Mammary epithelial cell (primary cell): ENCODE measurements at regions of chr10 and their contacts with region 1.

Region 1: GRCh38 chr10:132446661-132447194 is 49.7 kb downstream of the PWWP2B start:
- DNase-seq: peak; percentile 64
- H3K4me3 ChIP-seq: no peak overlapping the region
- H3K27ac ChIP-seq: peak overlapping the region; percentile 98
- H3K4me1 ChIP-seq: peaks cover 19% of the 10 kb centered on the region
- H3K27me3 ChIP-seq: no peaks in the 10 kb centered on the region
- CTCF ChIP-seq: peak; percentile 18 to 52

Region 2: GRCh38 chr10:131002031-131002861 is 1444.5 kb before region 1 on chr10:
- CTCF ChIA-PET with region 1: no interaction called
- dilution Hi-C with region 1: no loop called
- in situ Hi-C with region 1: no loop called
- intact Hi-C with region 1: no loop called
- DNase-seq: no peak
- H3K4me3 ChIP-seq: no peak overlapping the region
- H3K27ac ChIP-seq: no peak overlapping the region
- H3K4me1 ChIP-seq: no peaks in the 10 kb centered on the region
- H3K27me3 ChIP-seq: no peaks in the 10 kb centered on the region
- CTCF ChIP-seq: no peak

Region 3: GRCh38 chr10:132223156-132223590 is 223.6 kb before region 1 on chr10:
- CTCF ChIA-PET with region 1: no interaction called
- dilution Hi-C with region 1: no loop called
- in situ Hi-C with region 1: loop called (anchors 5 to 10 kb)
- intact Hi-C with region 1: no loop called
- DNase-seq: peak; percentile 55
- H3K4me3 ChIP-seq: no peak overlapping the region
- H3K27ac ChIP-seq: no peak overlapping the region
- H3K4me1 ChIP-seq: no peaks in the 10 kb centered on the region
- H3K27me3 ChIP-seq: no peaks in the 10 kb centered on the region
- CTCF ChIP-seq: peak; percentile 97 to 99

Region 4: GRCh38 chr10:132331526-132332432 is 114.9 kb before region 1 on chr10 and contains the start of gene LRRC27:
- CTCF ChIA-PET with region 1: no interaction called
- dilution Hi-C with region 1: no loop called
- in situ Hi-C with region 1: no loop called
- intact Hi-C with region 1: loop called (anchors 2 kb)
- DNase-seq: peak; percentile 96
- H3K4me3 ChIP-seq: peak within 1 kb of the TSS; percentile 90 to 99 (median 94)
- H3K27ac ChIP-seq: peak within 1 kb of the TSS; percentile 40
- H3K4me1 ChIP-seq: peaks cover 15% of the 10 kb centered on the region
- H3K27me3 ChIP-seq: no peaks in the 10 kb centered on the region
- CTCF ChIP-seq: no peak
- total RNA-seq, gene LRRC27: 6.1 to 6.8 TPM

Region 5: GRCh38 chr10:132396495-132397035 is 50.2 kb before region 1 on chr10:
- CTCF ChIA-PET with region 1: no interaction called
- dilution Hi-C with region 1: no loop called
- in situ Hi-C with region 1: loop called (anchors 5 kb)
- intact Hi-C with region 1: no loop called
- DNase-seq: no peak
- H3K4me3 ChIP-seq: peak overlapping the region in 2 of 3 experiments; percentile 59 to 66
- H3K27ac ChIP-seq: no peak overlapping the region
- H3K4me1 ChIP-seq: peaks cover 26% of the 10 kb centered on the region
- H3K27me3 ChIP-seq: no peaks in the 10 kb centered on the region
- CTCF ChIP-seq: peak in 1 of 2 donors; percentile 12

Region 6: DNA sequence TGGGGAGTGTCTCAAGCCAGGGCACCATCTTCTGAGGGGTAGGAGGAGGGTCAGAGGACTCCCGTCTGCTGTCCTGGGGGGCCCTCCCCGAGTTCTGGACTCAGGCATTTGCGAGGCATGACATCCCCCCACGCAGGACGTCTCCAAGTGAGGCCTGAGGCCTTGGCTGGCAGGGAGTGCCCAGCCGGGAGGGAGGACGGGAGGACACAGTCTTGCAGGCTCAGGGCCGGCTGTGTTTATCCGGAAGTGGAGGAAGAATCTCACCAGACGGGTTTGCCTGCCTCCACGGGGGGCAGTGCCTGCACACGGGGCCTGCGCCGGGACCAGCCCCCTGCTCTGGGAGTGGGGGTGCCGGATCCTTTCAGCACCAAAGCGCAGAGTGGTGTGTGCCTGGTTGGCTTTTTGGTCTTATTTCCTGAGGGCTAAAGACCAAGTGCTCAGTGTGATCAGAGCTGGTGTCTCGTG is 38.9 kb before region 1 on chr10:
- CTCF ChIA-PET with region 1: no interaction called
- dilution Hi-C with region 1: loop called (anchors 5 kb)
- in situ Hi-C with region 1: no loop called
- intact Hi-C with region 1: no loop called
- DNase-seq: peak; percentile 75
- H3K4me3 ChIP-seq: peak overlapping the region in 2 of 3 experiments; percentile 19 to 21
- H3K27ac ChIP-seq: peak overlapping the region; percentile 2
- H3K4me1 ChIP-seq: peaks cover 18% of the 10 kb centered on the region
- H3K27me3 ChIP-seq: no peaks in the 10 kb centered on the region
- CTCF ChIP-seq: peak in 1 of 2 donors; percentile 10

Region 7: DNA sequence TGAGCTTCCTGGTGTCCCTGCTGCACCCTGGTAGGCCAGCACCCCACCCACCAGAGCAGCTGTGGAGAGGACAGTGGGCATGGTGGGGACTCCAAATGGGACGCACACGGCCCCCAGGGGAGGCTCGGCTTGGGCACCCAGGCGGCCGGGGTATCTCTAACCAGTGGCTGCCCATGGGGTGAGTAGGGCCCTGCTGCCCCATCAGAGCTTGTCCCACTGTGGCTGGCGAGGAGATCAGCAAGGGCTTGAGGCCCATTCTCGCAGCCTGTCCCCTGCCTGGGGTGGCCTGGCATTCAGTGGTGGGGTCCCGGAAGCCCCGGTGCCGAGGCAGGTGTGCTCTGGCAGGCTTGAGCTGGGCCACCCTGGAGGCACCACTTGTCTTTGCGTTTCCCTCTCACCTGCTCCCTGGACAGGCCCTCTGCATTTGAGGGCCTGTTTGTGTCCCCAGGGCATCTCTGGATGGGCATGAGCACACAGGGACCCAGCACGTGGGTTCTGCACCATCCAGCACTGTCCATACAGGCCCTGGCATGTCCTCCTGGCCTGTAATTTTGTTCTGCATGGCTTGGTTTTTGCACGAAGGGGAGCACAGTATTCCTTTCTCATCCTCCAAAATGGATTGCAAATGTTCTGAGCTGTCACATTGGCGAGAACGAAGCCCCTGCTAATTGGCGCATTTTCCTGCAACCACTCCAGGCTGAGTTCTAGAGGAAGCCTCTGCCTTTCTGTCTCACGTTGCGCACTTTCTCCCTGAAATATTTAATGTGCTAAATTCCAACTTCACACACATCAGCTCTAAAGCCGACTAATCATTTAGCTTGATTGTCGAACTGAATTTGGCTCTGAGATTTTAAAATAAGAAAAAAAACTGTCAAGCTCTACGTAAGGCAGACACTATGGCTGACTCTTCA is 22.5 kb before region 1 on chr10:
- CTCF ChIA-PET with region 1: no interaction called
- dilution Hi-C with region 1: no loop called
- in situ Hi-C with region 1: no loop called
- intact Hi-C with region 1: loop called (anchors 2 kb)
- DNase-seq: peak; percentile 57
- H3K4me3 ChIP-seq: no peak overlapping the region
- H3K27ac ChIP-seq: no peak overlapping the region
- H3K4me1 ChIP-seq: peaks cover 13% of the 10 kb centered on the region
- H3K27me3 ChIP-seq: no peaks in the 10 kb centered on the region
- CTCF ChIP-seq: no peak

Region 8: DNA sequence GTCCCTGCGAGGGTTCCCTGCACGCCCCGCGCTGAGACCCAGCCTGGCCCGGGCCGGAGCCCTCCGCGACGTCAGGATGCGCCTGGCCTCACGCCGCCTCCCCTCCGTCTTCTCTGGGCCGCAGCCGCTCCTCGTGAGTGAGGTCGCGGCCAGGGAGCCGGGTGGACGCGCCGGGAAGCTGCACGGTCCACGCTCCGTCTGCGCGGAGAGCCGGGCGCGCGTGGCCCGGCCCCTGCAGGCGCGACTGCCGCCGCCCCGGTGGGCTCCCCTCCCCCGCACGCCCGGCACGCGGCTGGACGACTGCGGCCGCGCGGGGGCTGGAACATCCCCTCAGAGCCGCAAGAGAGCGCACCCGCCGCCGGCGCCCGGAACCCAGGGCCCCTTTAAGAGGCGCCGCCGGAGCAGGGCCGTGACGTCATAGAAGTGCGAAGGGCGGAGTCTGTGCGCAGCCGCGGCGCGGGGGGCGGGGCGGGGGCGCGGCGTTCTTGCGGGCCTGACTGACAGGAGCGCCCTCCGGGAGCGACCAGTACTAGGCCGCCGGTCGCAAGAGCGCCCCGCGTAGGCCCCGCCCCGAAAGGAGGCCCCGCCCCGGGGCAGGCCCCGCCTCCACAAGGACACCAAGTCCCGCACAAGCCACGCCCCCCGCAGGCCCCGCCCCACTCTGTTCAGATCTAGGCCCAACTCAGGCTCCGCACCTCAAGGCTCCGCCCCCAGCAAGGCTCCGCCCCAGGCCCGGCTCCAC is 90.4 kb after region 1 on chr10:
- CTCF ChIA-PET with region 1: no interaction called
- dilution Hi-C with region 1: no loop called
- in situ Hi-C with region 1: no loop called
- intact Hi-C with region 1: no loop called
- DNase-seq: peak; percentile 99
- H3K4me3 ChIP-seq: peak overlapping the region; percentile 45 to 83 (median 73)
- H3K27ac ChIP-seq: no peak overlapping the region
- H3K4me1 ChIP-seq: peaks cover 28% of the 10 kb centered on the region
- H3K27me3 ChIP-seq: no peaks in the 10 kb centered on the region
- CTCF ChIP-seq: no peak